ENCODE measurements at regions of chr10 and their contacts with region 1.

Region 1: DNA sequence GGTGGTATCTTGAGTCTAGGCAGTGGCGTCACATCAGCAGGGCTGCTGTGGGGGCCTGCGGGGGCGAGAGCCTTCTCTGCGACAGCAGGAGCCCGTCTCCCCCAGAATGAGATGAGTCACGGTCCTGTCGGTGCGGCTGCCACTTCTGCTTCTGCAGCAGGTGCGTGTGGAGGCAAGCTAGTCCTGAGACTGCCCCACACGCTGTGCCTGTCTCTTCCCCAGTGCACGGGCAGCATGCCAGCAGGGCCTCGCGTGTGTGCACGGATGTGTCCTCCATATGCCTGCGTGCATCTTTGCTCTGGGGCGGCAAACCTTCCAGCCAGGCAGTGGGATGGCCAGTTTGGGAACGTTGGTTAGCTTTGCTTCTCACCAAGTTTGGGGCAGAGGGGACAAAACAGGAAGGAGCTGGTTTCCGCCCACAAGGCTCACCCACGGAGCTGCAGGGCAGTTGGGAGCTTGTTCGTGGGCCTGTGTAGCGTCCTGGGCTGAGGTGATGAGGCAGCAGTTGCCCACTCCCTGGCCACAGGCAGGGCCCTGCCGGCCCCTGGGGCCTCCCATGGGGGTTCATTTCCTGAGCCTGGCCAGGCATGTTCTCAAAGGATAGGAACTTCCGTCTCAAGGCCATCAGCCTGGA is 60.8 kb upstream of the PPIF start:
- DNase-seq: peak; percentile 70
- H3K4me3 Mint-ChIP-seq: peak overlapping the region; percentile 65
- H3K27ac Mint-ChIP-seq: peak overlapping the region; percentile 93
- H3K4me1 Mint-ChIP-seq: peaks cover 53% of the 10 kb centered on the region
- H3K27me3 Mint-ChIP-seq: no peaks in the 10 kb centered on the region

Region 2: DNA sequence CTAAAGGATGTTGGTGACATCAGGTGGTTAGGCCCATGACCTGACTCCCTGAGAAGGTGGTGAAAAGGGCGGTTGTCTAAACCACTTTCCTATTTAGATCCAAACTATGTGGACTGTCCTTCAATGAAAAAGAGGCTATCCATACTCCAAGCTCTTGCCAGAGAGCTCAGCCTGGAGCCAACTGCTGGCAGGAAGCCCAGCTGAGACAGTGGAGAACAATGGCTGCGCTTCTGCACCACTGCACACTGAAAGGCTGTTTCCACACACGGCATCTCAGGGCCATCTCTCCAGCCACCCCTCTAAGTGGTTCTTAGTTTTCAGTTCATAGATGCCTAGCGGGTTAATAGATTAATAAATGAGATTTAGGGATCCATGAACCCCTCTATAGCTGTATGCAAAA is 706.4 kb before region 1 on chr10:
- intact Hi-C with region 1: loop called (anchors 5 kb)
- DNase-seq: no peak
- H3K4me3 Mint-ChIP-seq: no peak overlapping the region
- H3K27ac Mint-ChIP-seq: no peak overlapping the region
- H3K4me1 Mint-ChIP-seq: peaks cover 18% of the 10 kb centered on the region
- H3K27me3 Mint-ChIP-seq: peaks cover 2% of the 10 kb centered on the region

Region 3: DNA sequence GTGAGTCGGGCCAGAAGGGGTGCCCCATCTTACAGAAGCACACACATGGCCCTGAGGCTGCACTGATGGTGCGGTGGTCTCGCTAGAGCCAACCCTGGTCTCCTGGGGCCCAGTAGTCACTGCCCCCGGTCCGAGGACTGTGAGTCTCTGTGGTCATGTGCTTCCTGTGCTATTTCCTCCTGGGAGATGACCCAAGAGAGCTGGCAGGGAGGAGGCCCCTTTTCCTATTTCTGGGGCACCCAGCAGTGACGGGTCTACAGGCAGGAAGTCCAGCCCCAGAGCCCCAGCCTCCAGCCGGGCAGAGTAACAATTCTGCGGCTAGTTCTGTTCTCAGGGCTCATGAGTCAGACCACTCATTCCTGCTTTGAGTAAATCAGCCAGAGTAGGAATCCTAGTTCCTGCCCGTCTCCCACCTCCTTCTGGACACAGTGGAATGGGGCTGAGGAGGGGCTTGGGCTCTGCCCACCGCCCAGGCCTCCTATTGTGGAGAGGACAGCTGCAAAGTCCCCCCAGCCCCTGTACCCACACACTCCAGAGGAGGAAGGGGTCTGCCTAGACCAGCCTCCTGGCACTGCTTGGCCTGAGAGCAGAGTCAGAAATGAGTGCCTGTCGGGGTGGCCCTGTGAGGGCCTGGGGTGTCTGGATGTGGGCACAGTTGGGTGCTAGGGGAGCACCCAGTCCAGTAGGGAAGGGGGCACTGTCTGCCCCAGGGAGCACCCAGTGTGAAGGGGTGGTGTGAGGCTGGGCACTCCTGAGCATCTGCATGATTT is 19.7 kb before region 1 on chr10:
- intact Hi-C with region 1: loop called (anchors 2 kb)
- DNase-seq: no peak
- H3K4me3 Mint-ChIP-seq: no peak overlapping the region
- H3K27ac Mint-ChIP-seq: peak overlapping the region; percentile 62
- H3K4me1 Mint-ChIP-seq: peaks cover 31% of the 10 kb centered on the region
- H3K27me3 Mint-ChIP-seq: no peaks in the 10 kb centered on the region

Region 4: GRCh38 chr10:79322616-79323543 is 36.4 kb after region 1 on chr10:
- intact Hi-C with region 1: loop called (anchors 2 kb)
- DNase-seq: peak; percentile 72
- H3K4me3 Mint-ChIP-seq: peak overlapping the region; percentile 68
- H3K27ac Mint-ChIP-seq: peak overlapping the region; percentile 98
- H3K4me1 Mint-ChIP-seq: peaks cover 67% of the 10 kb centered on the region
- H3K27me3 Mint-ChIP-seq: no peaks in the 10 kb centered on the region

Region 5: GRCh38 chr10:79347226-79347893 is 60.9 kb after region 1 on chr10 and contains the start of gene PPIF:
- intact Hi-C with region 1: loop called (anchors 2 kb)
- DNase-seq: peak; percentile 92
- H3K4me3 Mint-ChIP-seq: peak within 1 kb of the TSS; percentile 93
- H3K27ac Mint-ChIP-seq: peak within 1 kb of the TSS; percentile 91
- H3K4me1 Mint-ChIP-seq: peaks cover 40% of the 10 kb centered on the region
- H3K27me3 Mint-ChIP-seq: no peaks in the 10 kb centered on the region
- total RNA-seq, gene PPIF: 119 and 120 TPM in 2 replicates

Measured in activated T-helper 2 cell treated with anti-CD3 and anti-CD28 coated beads, Interferon-gamma antibody, Interleukin-2, Interleukin-4, amounts not matched to agents 10 μg/mL and 5 μg/mL and 100 μg/mL, durations not matched to agents 14 hours and 24 hours and 36 hours (primary cell).